Calu3 (cell line): ENCODE measurements at regions of chr11 and their contacts with region 1.

Region 1: DNA sequence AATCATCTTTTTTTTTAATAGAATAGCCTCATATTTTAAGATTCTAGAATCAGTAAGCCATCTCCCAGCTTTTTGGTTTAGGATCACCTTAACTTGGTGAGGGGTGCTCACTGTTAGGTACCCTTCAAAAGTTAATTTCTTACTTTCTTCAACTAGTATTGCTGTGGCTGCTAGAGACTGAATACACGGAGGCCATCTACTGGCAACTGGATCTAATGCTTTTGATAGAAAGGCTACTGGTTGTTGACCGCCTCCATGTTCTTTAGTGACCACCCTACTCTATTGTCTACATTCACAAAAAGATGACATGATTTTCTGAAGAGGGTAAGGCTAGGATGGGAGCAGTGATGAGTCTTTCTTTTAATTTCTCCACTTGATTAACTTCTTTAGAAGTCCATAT is 16.7 kb upstream of the ALDH3B2 start:
- DNase-seq: no peak
- H3K4me3 Mint-ChIP-seq: no peak overlapping the region
- H3K27ac Mint-ChIP-seq: no peak overlapping the region
- H3K4me1 Mint-ChIP-seq: no peaks in the 10 kb centered on the region
- H3K27me3 Mint-ChIP-seq: no peaks in the 10 kb centered on the region
- CTCF ChIP-seq: peak; percentile 15

Region 2: GRCh38 chr11:67505605-67506396 is 185.3 kb before region 1 on chr11:
- CTCF ChIA-PET with region 1: no interaction called
- intact Hi-C with region 1: no loop called
- DNase-seq: peak; percentile 96
- H3K4me3 Mint-ChIP-seq: peak overlapping the region; percentile 91
- H3K27ac Mint-ChIP-seq: peak overlapping the region; percentile 97
- H3K4me1 Mint-ChIP-seq: peaks cover 27% of the 10 kb centered on the region
- H3K27me3 Mint-ChIP-seq: peaks cover 5% of the 10 kb centered on the region
- CTCF ChIP-seq: peak; percentile 92

Region 3: GRCh38 chr11:67572747-67573419 is 118.3 kb before region 1 on chr11:
- CTCF ChIA-PET with region 1: no interaction called
- intact Hi-C with region 1: no loop called
- DNase-seq: peak; percentile 71
- H3K4me3 Mint-ChIP-seq: peak overlapping the region; percentile 39
- H3K27ac Mint-ChIP-seq: no peak overlapping the region
- H3K4me1 Mint-ChIP-seq: peaks cover 28% of the 10 kb centered on the region
- H3K27me3 Mint-ChIP-seq: no peaks in the 10 kb centered on the region
- CTCF ChIP-seq: peak; percentile 58

Region 4: DNA sequence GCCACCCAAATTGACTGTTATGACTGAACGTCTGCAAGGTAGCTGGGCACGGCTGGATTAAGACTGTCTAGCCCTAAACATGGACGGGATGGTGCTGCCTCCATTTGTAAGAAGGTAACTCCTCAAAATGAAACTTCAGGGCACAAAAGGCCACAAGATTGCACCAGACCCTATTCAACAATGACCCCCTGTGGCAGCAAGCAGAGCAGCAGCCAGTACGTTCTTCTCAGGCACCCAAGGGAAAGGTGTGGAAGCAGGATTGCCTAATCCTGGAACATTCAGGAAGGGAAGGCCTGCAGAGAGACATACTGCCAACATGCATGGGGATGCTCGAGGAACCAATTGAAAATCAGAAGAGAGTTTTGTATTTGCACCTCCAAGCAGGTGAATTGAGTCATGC is 47.1 kb before region 1 on chr11:
- CTCF ChIA-PET with region 1: no interaction called
- intact Hi-C with region 1: no loop called
- DNase-seq: no peak
- H3K4me3 Mint-ChIP-seq: no peak overlapping the region
- H3K27ac Mint-ChIP-seq: no peak overlapping the region
- H3K4me1 Mint-ChIP-seq: no peaks in the 10 kb centered on the region
- H3K27me3 Mint-ChIP-seq: no peaks in the 10 kb centered on the region
- CTCF ChIP-seq: peak; percentile 19

Region 5: DNA sequence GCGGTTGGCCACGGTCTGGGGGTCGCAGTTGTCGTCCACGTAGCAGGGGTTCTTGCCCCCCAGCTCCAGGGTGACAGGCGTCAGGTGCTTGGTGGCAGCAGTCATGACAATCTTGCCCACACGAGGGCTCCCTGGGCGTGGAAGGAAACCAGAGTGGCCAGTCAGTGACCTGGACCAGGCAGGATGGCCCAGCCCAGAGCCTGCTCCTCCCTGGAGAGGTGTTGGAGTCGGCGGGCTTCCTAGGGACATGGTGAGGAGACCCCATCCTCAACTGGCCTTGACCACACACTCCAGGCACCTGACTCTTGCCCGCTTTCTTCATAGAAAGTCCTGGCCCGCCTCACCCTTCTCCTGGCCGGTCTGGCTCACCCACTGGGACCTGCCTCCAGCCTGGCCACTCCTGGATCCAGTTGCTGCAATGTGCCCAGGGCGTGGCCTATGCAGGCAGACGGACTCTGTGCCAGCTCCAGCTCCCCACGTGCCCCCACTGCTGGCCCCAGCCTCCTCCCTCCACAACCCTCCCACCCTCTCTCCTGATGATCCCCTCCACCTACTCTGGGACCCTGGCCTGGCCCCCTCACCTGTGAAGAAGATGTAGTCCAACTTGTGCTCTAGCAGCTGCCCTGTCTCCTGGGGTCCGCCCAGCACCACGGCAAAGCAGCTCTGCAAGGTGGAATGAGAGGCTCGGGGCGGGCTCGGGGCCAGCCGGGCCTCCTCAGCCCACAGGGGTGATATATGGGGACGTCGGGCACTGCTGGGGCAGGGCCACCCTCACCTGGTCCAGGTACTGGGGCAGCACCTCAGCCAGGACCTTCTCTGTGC is 25.4 kb before region 1 on chr11:
- CTCF ChIA-PET with region 1: interaction called, 6 read pairs
- intact Hi-C with region 1: loop called (anchors 1 kb)
- DNase-seq: peak; percentile 77
- H3K4me3 Mint-ChIP-seq: no peak overlapping the region
- H3K27ac Mint-ChIP-seq: no peak overlapping the region
- H3K4me1 Mint-ChIP-seq: no peaks in the 10 kb centered on the region
- H3K27me3 Mint-ChIP-seq: no peaks in the 10 kb centered on the region
- CTCF ChIP-seq: peak; percentile 53

Region 6: DNA sequence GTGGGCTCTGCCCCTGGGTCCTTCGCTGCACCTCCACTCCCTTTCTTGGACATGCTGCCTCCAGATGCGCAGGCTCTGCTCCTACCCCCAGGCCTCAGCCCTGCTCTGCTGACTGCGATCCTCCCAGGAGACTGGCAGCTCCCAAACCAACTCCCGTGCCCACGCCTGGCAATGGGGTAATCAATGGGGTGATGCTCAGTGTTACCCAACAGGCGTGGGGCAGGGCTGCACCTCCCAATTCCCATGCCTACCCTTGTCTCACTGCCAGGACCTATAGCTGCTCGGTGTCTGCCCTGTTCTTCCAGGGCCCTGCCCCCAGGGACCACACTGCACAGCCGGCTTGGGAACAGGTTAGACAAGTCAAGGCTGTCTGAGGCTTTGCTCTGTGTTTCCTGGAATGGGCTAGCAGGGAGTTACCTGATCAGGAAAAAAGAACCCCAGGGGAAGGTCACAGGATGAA is 16.7 kb before region 1 on chr11 and contains the start of gene ALDH3B2:
- CTCF ChIA-PET with region 1: no interaction called
- intact Hi-C with region 1: loop called (anchors 1 kb)
- DNase-seq: peak; percentile 88
- H3K4me3 Mint-ChIP-seq: peak within 1 kb of the TSS; percentile 56
- H3K27ac Mint-ChIP-seq: peak within 1 kb of the TSS; percentile 71
- H3K4me1 Mint-ChIP-seq: peaks cover 21% of the 10 kb centered on the region
- H3K27me3 Mint-ChIP-seq: no peaks in the 10 kb centered on the region
- CTCF ChIP-seq: no peak
- total RNA-seq, gene ALDH3B2: 2.4 and 2.9 TPM in 2 replicates